Heart left ventricle (tissue), 16 donors: ENCODE measurements at regions of chr14 and their contacts with region 1.

Region 1: DNA sequence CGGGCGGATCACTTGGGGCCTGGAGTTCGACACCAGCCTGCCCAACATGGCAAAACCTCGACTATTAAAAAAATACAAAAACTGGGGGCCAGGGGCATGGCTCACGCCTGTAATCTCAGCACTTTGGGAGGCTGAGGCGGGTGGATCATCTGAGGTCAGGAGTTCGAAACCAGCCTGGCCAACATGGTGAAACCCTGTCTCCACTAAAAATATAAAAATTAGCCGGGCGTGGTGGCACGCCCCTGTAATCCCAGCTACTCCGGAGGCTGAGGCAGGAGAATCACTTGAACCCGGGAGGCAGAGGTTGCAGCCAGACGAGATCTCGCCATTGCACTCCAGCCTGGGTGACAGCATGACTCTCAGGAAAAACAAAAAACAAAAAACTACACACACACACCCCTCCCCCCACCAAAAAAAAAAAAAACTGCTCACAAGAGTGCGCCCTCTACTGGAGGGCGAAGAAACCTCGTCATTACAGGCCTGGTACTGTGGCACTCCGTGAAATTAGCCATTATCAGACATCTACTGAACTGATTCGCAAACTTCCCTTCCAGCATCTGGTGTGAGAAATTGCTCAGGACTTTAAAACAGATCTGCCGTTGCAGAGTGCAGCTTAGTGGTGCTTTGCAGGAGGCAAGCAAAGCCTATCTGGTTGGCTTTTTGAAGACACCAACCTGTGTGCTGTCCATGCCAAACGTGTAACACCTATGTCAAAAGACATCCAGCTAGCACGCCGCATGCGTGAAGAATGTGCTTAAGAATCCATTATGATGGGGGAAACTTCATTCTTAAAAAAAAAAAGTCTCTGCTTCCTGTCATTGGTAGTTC is 7.7 kb downstream of the PPP1R3E start:
- DNase-seq: peak in 1 of 5 donors; percentile 55
- ATAC-seq: peak in 3 of 4 donors; percentile 49 to 67 (median 63)
- H3K4me3 ChIP-seq: no peak overlapping the region
- H3K27ac ChIP-seq: peak overlapping the region in 2 of 12 donors; percentile 17 to 25
- H3K4me1 ChIP-seq: peaks cover 0 to 35% (median 25%) of the 10 kb centered on the region in 12 donors
- H3K27me3 ChIP-seq: no peaks in the 10 kb centered on the region
- CTCF ChIP-seq: peak; percentile 78 to 89 (median 85)
- POLR2A ChIP-seq: no peak

Region 2: DNA sequence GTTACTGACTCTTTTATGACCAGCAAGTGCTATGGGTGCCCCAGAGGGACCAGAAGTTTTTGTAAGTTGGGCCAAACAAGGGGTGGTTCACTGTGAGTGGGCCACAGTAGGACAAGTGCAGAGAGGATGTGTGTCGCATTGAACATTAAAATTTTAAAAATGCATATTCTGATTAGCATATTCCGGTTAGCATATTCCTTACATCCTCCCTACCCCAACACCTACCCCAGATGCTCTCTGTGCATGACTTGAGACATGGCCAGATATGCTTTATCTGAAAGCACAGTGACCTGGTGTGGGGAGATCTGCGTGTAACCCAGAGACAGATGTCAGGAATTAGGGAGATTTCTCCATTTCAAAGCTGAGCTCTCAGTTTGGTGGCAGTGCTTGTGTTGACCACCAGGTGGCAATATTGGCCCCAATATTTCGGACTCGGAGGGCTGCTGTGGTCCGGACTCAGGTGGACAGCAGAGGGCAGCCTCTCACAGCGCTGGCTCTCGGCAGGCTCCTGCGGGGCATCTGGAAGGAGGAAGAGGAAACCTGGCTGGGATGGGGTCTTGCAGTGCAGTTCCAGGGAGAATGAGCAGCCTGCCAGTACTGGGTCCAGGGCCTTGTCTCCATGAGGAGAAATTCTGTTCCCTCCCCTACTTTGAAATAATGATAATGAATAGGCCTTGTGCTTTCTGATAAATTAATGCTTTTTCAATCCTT is 174.3 kb before region 1 on chr14:
- intact Hi-C with region 1: loop called in 6 of 10 experiments (anchors 2 to 10 kb)
- DNase-seq: peak; percentile 88 to 94 (median 90)
- ATAC-seq: peak; percentile 75 to 86 (median 80)
- H3K4me3 ChIP-seq: no peak overlapping the region
- H3K27ac ChIP-seq: peak overlapping the region in 5 of 12 donors; percentile 10 to 79 (median 15)
- H3K4me1 ChIP-seq: peaks cover 0 to 31% (median 8%) of the 10 kb centered on the region in 12 donors
- H3K27me3 ChIP-seq: peaks cover 0 to 3% (median 0%) of the 10 kb centered on the region in 9 donors
- CTCF ChIP-seq: peak; percentile 99 to 100 (median 100)
- POLR2A ChIP-seq: no peak

Region 3: DNA sequence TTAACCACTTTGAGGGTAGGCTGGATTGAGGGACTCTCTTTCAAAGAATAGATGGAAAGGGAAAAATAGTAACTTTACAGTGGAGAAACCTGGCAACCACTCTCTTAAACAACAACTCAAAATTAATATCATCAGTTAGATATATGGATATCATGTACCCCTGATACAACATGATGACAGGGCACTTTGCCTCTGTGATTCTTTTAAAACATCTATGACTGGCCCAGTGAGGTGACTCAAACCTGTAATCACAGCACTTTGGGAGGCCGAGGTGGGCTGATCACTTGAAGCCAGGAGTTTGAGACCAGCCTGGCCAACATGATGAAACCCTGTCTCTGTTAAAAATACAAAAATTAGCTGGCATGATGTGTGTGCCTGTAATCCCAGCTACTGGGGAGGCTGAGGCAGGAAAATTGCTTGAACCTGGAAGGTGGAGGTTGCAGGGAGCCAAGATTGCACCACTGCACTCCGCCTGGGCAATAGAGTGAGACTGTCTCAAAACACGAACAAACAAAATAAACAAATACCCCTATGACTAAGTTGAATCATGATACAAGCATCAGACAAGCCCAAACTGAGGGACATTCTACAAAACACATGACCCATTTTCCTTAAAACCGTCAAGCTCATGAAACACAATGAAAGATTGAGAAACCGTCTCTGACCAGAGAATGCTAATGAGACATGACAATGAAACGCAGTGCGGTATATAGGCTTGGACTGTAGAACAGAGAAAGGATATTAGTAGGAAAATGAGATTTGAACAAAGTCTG is 85.1 kb before region 1 on chr14:
- intact Hi-C with region 1: no loop called
- DNase-seq: no peak
- ATAC-seq: no peak
- H3K4me3 ChIP-seq: no peak overlapping the region
- H3K27ac ChIP-seq: no peak overlapping the region
- H3K4me1 ChIP-seq: no peaks in the 10 kb centered on the region
- H3K27me3 ChIP-seq: peaks cover 0 to 6% (median 0%) of the 10 kb centered on the region in 9 donors
- CTCF ChIP-seq: no peak
- POLR2A ChIP-seq: no peak

Region 4: GRCh38 chr14:23245282-23245681 is 49.7 kb before region 1 on chr14:
- intact Hi-C with region 1: no loop called
- DNase-seq: no peak
- ATAC-seq: no peak
- H3K4me3 ChIP-seq: no peak overlapping the region
- H3K27ac ChIP-seq: no peak overlapping the region
- H3K4me1 ChIP-seq: no peaks in the 10 kb centered on the region
- H3K27me3 ChIP-seq: no peaks in the 10 kb centered on the region
- CTCF ChIP-seq: no peak
- POLR2A ChIP-seq: no peak

Region 5: GRCh38 chr14:23259426-23259825 is 35.5 kb before region 1 on chr14:
- intact Hi-C with region 1: loop called in 3 of 10 experiments (anchors 2 kb)
- DNase-seq: no peak
- ATAC-seq: no peak
- H3K4me3 ChIP-seq: no peak overlapping the region
- H3K27ac ChIP-seq: no peak overlapping the region
- H3K4me1 ChIP-seq: no peaks in the 10 kb centered on the region
- H3K27me3 ChIP-seq: peaks cover 0 to 18% (median 4%) of the 10 kb centered on the region in 9 donors
- CTCF ChIP-seq: no peak
- POLR2A ChIP-seq: no peak

Region 6: DNA sequence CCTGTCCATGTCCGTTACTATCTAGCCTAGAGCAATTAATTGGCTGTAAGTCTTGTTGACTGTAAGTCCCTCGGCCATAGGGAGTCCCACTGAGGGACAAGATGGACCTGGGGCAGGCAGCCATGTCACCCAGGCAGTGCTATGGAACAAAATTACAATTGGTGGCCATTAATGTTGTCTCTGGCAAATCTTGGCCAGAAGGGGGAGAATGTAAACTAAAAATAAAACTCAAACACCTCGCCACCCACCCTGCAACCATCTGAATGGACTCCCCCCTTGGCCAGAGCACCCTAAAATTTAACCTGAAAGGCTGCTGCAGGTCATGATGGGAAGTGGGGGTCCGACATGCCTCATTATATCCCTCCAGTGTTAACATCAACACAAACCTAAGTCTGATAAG is 49.5 kb after region 1 on chr14:
- intact Hi-C with region 1: no loop called
- DNase-seq: no peak
- ATAC-seq: no peak
- H3K4me3 ChIP-seq: no peak overlapping the region
- H3K27ac ChIP-seq: no peak overlapping the region
- H3K4me1 ChIP-seq: peaks cover 0 to 9% (median 0%) of the 10 kb centered on the region in 12 donors
- H3K27me3 ChIP-seq: no peaks in the 10 kb centered on the region
- CTCF ChIP-seq: no peak
- POLR2A ChIP-seq: no peak